Activated T-helper 2 cell treated with anti-CD3 and anti-CD28 coated beads, Interferon-gamma antibody, Interleukin-2, Interleukin-4, amounts not matched to agents 10 μg/mL and 5 μg/mL and 100 μg/mL, durations not matched to agents 14 hours and 24 hours and 36 hours (primary cell): ENCODE measurements at regions of chr17 and their contacts with region 1.

Region 1: GRCh38 chr17:37791447-37792399 is 46.9 kb upstream of the HNF1B start:
- DNase-seq: peak; percentile 38
- H3K4me3 Mint-ChIP-seq: no peak overlapping the region
- H3K27ac Mint-ChIP-seq: no peak overlapping the region
- H3K4me1 Mint-ChIP-seq: peaks cover 8% of the 10 kb centered on the region
- H3K27me3 Mint-ChIP-seq: peaks cover 18% of the 10 kb centered on the region

Region 2: GRCh38 chr17:37527249-37527851 is 264.4 kb before region 1 on chr17:
- intact Hi-C with region 1: loop called (anchors 5 kb)
- DNase-seq: no peak
- H3K4me3 Mint-ChIP-seq: no peak overlapping the region
- H3K27ac Mint-ChIP-seq: no peak overlapping the region
- H3K4me1 Mint-ChIP-seq: no peaks in the 10 kb centered on the region
- H3K27me3 Mint-ChIP-seq: no peaks in the 10 kb centered on the region

Region 3: GRCh38 chr17:37648555-37648954 is 143.2 kb before region 1 on chr17:
- intact Hi-C with region 1: loop called (anchors 5 kb)
- DNase-seq: no peak
- H3K4me3 Mint-ChIP-seq: no peak overlapping the region
- H3K27ac Mint-ChIP-seq: no peak overlapping the region
- H3K4me1 Mint-ChIP-seq: peaks cover 17% of the 10 kb centered on the region
- H3K27me3 Mint-ChIP-seq: peaks cover 68% of the 10 kb centered on the region

Region 4: GRCh38 chr17:37708616-37709212 is 83.0 kb before region 1 on chr17:
- intact Hi-C with region 1: loop called (anchors 2 kb)
- DNase-seq: no peak
- H3K4me3 Mint-ChIP-seq: no peak overlapping the region
- H3K27ac Mint-ChIP-seq: no peak overlapping the region
- H3K4me1 Mint-ChIP-seq: peaks cover 10% of the 10 kb centered on the region
- H3K27me3 Mint-ChIP-seq: peaks cover 29% of the 10 kb centered on the region

Region 5: DNA sequence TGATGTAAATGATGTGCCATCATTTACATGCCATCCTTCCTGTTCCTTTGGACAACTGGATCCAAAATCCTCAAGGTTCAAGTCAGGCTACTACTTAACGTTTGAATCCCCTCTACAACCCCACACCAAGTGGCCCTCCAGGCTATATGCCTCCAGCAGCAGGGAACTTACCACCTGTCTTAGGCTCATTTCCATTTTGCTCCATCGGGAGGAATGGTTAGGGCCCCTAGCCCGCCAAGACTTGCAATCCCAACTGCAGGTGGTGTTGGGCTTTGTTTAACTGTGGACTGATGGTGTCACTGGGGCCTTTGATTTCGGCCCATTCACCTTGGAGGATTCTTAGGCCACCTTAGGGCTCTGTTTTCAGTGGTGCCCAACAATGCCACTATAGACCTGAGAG is 56.6 kb before region 1 on chr17:
- intact Hi-C with region 1: no loop called
- DNase-seq: no peak
- H3K4me3 Mint-ChIP-seq: no peak overlapping the region
- H3K27ac Mint-ChIP-seq: no peak overlapping the region
- H3K4me1 Mint-ChIP-seq: peaks cover 4% of the 10 kb centered on the region
- H3K27me3 Mint-ChIP-seq: peaks cover 34% of the 10 kb centered on the region

Region 6: DNA sequence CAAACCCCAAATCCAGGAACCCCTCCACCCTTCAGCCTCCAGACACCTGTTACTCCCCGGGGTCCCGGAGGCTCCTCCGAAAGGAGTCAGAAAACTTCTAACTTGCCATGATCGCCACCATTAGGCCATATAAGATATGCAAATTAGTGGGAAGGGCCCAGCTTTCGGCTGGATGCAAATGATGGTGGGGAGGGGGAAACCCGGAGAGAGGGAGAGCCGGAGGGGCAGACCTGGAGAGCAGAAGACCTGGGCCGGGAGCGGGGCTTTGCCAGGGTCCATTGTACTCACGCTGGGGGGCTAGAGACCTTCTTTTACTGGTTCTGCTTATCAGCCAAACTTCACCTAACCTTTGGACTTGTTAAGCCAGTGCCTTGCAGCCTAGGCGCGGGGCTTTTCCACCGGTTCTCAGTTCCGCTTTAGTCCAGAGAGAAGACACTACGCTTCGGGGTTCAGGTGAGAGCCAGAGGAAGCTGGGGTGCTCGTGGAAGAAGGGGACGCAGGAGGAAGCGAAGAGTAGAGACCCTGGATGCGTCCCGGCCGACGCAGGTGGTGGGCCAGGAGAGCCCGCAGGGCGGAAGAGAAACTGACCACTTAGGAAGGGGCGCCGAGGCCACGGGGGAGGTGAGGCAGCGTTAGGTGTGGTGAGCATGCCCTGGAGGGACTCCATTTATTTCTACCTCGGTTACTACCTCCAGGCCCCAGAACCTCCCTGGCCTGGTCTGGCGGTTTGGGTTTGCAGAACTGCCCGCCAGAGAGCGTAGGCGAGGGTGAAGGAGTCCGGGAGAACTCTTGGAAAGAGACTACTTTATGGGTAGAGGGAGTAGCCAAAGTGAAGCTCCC is 46.5 kb before region 1 on chr17 and contains the start of gene HNF1B:
- intact Hi-C with region 1: loop called (anchors 1 kb)
- DNase-seq: no peak
- H3K4me3 Mint-ChIP-seq: peak within 1 kb of the TSS; percentile 74
- H3K27ac Mint-ChIP-seq: peak within 1 kb of the TSS; percentile 49
- H3K4me1 Mint-ChIP-seq: peaks cover 29% of the 10 kb centered on the region
- H3K27me3 Mint-ChIP-seq: peaks cover 64% of the 10 kb centered on the region
- total RNA-seq, gene HNF1B: 4.6 and 5.0 TPM in 2 replicates